ENCODE measurements at regions of chr9 and their contacts with region 1.

Region 1: DNA sequence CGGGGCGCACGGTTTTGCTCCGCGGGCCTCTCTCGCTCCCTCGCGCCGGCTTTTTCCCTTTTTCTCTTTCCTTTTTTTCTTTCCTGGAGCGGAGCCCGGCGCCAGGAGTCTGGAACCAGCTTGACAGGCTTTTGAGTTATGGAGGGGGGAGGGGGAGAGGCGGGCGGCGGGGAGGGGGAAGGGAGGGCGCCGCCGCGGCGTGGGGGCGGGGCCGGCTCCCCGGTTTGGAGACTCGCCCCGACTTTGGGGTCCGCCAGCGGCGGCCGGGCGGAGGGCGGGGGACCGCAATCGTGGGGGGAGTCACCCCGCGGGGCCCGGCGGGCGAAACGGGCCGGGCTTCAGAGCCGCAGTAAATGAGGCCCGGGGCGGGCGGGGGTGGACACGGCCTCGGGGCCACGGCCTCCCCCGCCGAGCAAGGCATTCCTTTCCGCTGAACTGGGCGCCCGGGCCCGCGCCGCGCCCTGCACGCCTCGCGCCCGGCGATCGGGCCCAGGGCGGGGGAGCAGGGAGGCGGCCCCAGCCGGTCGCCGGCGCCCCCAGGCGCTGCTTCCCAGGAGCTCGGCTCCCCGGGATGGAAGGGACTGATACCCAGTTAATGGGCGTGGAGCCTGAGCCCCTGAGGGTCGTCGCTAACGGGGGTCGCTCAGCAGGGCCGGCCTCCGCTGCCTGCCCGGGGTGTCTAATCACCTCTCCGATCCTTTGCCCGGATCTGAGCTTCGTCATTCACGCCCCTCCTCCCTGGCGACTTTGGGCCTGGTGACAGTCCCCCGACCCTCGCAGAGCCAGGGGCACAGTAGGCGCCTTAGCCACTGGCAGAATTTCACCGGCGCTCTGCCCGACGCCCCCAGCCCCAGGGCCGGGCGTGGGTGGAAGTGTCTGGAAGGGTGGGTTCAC is 138.1 kb downstream of the C9orf50 start:
- DNase-seq: no peak
- H3K4me3 Mint-ChIP-seq: peak overlapping the region; percentile 57
- H3K27ac Mint-ChIP-seq: peak overlapping the region; percentile 52
- H3K4me1 Mint-ChIP-seq: peaks cover 28% of the 10 kb centered on the region
- H3K27me3 Mint-ChIP-seq: no peaks in the 10 kb centered on the region

Region 2: GRCh38 chr9:129511320-129511885 is 28.6 kb after region 1 on chr9:
- intact Hi-C with region 1: loop called (anchors 1 kb)
- DNase-seq: no peak
- H3K4me3 Mint-ChIP-seq: no peak overlapping the region
- H3K27ac Mint-ChIP-seq: no peak overlapping the region
- H3K4me1 Mint-ChIP-seq: peaks cover 3% of the 10 kb centered on the region
- H3K27me3 Mint-ChIP-seq: peaks cover 1% of the 10 kb centered on the region

Region 3: GRCh38 chr9:129626079-129626624 is 143.4 kb after region 1 on chr9 and contains the start of gene NTMT1:
- intact Hi-C with region 1: loop called (anchors 10 kb)
- DNase-seq: peak; percentile 88
- H3K4me3 Mint-ChIP-seq: peak within 1 kb of the TSS; percentile 85
- H3K27ac Mint-ChIP-seq: peak within 1 kb of the TSS; percentile 96
- H3K4me1 Mint-ChIP-seq: peaks cover 45% of the 10 kb centered on the region
- H3K27me3 Mint-ChIP-seq: peaks cover 5% of the 10 kb centered on the region
- total RNA-seq, gene NTMT1: 58.4 and 61.5 TPM in 2 replicates

Region 4: DNA sequence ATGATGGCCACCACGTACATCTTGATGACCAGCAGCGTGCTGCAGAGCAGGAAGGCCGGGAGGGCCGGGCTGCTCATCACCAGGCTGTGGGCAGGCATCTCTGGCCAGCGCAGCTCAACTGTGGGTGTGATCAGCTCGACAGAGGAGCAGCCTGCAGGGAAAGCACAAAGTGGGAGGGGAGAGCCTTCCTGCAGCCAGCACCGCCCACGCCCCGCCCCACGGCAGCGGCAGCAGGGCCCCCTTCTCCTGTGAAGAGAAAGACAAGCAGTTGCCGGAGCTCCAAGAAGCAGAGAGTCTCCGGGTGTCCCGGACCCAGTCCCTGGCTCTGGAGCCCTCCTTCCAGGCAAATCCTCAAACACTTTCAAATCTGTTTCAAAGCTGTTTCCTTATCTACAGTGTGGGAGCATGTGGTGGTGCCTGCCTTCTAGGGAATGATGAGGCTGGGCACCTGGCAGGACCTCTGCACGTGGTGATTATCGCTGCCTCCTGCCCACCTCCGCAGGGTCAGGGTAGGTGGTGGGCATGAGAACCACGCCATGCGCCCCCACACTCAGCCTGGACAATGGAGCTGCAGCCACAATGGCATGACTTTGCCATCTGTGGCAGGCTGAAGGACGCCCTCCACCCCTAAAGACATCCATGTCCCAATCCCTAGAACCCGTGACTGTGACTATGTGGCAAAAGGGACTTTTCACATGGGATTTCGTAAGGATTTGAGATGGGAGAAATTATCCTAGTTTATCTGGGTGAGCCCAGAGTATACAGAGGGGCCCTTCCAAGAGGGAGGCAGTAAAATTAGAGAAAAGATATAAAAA is 270.4 kb after region 1 on chr9 and contains the start of gene PTGES:
- intact Hi-C with region 1: no loop called
- DNase-seq: peak; percentile 43
- H3K4me3 Mint-ChIP-seq: peak within 1 kb of the TSS; percentile 18
- H3K27ac Mint-ChIP-seq: no peak within 1 kb of the TSS
- H3K4me1 Mint-ChIP-seq: peaks cover 14% of the 10 kb centered on the region
- H3K27me3 Mint-ChIP-seq: peaks cover 7% of the 10 kb centered on the region
- total RNA-seq, gene PTGES: 0.34 and 0.39 TPM in 2 replicates

Measured in activated T-helper 2 cell treated with anti-CD3 and anti-CD28 coated beads, Interferon-gamma antibody, Interleukin-2, Interleukin-4, amounts not matched to agents 10 μg/mL and 5 μg/mL and 100 μg/mL, durations not matched to agents 14 hours and 24 hours and 36 hours (primary cell).